Activated CD4-positive, alpha-beta T cell treated with anti-CD3 and anti-CD28 coated beads for 36 hours (primary cell): ENCODE measurements at regions of chr1 and their contacts with region 1.

Region 1: GRCh38 chr1:48677306-48678287 is 99.1 kb downstream of the BEND5 start:
- DNase-seq: peak; percentile 71
- ATAC-seq: peak; percentile 77
- H3K4me3 Mint-ChIP-seq: no peak overlapping the region
- H3K27ac Mint-ChIP-seq: no peak overlapping the region
- H3K4me1 Mint-ChIP-seq: no peaks in the 10 kb centered on the region
- H3K27me3 Mint-ChIP-seq: peaks cover 20% of the 10 kb centered on the region

Region 2: GRCh38 chr1:48697066-48697707 is 19.6 kb after region 1 on chr1:
- CTCF ChIA-PET with region 1: interaction called, 11 read pairs
- POLR2A ChIA-PET with region 1: no interaction called
- intact Hi-C with region 1: no loop called
- DNase-seq: peak; percentile 76
- ATAC-seq: no peak
- H3K4me3 Mint-ChIP-seq: no peak overlapping the region
- H3K27ac Mint-ChIP-seq: no peak overlapping the region
- H3K4me1 Mint-ChIP-seq: no peaks in the 10 kb centered on the region
- H3K27me3 Mint-ChIP-seq: peaks cover 7% of the 10 kb centered on the region

Region 3: DNA sequence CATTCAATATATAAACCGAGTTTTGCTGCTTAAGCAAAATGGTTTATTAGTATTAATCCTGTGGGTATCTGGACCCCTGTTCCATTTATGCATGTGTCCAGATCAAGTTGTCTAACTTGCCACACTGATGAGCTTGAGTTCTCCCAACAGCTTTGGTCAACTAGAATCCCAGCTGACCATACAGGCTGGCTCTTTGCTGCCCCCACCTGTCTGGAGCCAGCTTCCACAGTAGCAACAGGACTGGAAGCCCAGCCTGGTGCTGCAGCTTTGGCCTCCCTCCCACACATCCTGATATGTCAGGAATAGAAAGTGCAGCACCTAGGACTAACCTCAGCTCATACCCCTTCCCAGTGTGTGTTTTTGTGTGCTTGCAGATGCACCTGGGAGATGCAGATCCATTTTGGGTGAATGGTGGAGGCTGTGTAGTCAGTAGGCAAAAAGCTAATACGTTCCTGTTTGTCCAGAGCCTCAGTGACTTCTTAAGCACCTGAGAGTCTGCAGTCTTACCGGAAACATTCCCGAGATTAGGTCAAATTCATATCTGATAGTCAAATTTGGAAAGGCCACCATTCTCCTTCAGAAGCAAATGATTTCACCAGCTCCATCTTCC is 140.0 kb after region 1 on chr1:
- CTCF ChIA-PET with region 1: interaction called, 23 read pairs
- POLR2A ChIA-PET with region 1: no interaction called
- intact Hi-C with region 1: loop called (anchors 1 kb)
- DNase-seq: peak; percentile 66
- ATAC-seq: peak; percentile 58
- H3K4me3 Mint-ChIP-seq: no peak overlapping the region
- H3K27ac Mint-ChIP-seq: no peak overlapping the region
- H3K4me1 Mint-ChIP-seq: no peaks in the 10 kb centered on the region
- H3K27me3 Mint-ChIP-seq: peaks cover 6% of the 10 kb centered on the region

Region 4: GRCh38 chr1:48870596-48870995 is 193.0 kb after region 1 on chr1:
- CTCF ChIA-PET with region 1: interaction called, 3 read pairs
- POLR2A ChIA-PET with region 1: no interaction called
- intact Hi-C with region 1: loop called in 1 of 2 experiments (anchors 10 kb)
- DNase-seq: peak; percentile 20
- ATAC-seq: no peak
- H3K4me3 Mint-ChIP-seq: no peak overlapping the region
- H3K27ac Mint-ChIP-seq: no peak overlapping the region
- H3K4me1 Mint-ChIP-seq: no peaks in the 10 kb centered on the region
- H3K27me3 Mint-ChIP-seq: peaks cover 11% of the 10 kb centered on the region

Region 5: DNA sequence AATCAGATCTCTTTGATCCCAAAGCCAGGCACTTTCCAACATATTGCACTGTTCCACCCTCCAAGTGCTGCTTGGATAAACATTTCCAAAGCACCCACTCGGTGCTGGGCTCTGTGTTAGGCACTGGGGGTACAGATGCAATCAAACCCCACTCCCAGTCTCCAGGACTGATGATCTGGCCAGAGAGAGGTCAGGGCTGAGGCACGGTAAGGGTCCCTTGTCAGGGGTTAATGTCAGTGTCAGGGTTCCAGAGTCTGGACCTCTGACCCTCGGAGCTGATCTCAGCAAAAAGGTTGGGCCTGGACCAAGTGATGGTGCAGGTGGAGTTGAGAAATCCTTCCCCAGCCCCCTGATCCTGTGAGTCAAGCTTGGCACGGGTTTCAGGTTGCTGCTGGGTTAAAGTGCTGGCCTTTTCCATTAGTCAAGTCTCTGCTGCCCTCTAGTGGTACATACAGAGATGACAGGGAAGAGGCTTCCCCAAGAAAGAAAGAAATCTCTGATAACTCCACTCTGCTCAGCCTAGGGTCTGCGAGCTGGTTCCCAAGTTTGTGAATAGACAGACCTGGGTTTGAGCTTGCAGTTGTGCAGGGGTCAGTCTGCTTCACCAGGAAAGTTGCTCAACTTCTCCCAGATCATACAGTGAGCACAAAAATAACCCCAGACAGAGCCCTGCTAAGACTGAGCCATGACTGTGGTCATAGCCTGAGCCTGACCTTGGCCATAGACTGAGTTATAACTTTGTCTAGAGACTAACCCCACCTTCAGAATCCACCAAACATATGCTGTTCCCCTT is 1671.0 kb after region 1 on chr1:
- CTCF ChIA-PET with region 1: interaction called, 4 read pairs
- POLR2A ChIA-PET with region 1: no interaction called
- intact Hi-C with region 1: loop called (anchors 2 to 5 kb)
- DNase-seq: peak; percentile 64
- ATAC-seq: peak; percentile 81
- H3K4me3 Mint-ChIP-seq: no peak overlapping the region
- H3K27ac Mint-ChIP-seq: no peak overlapping the region
- H3K4me1 Mint-ChIP-seq: no peaks in the 10 kb centered on the region
- H3K27me3 Mint-ChIP-seq: peaks cover 14% of the 10 kb centered on the region